K562 (cell line): ENCODE measurements at regions of chr20 and their contacts with region 1.

Region 1: GRCh38 chr20:45771182-45771759 is 20.4 kb downstream of the WFDC3 start:
- DNase-seq: peak; percentile 73 to 87 (median 74)
- ATAC-seq: peak; percentile 87
- H3K4me3 ChIP-seq: no peak overlapping the region
- H3K27ac ChIP-seq: no peak overlapping the region
- H3K4me1 ChIP-seq: peaks cover 0 to 2% of the 10 kb centered on the region in 2 experiments; a peak in 2 of 5 replicates
- H3K27me3 ChIP-seq: peaks cover 5 to 8% of the 10 kb centered on the region in 2 experiments
- CTCF ChIP-seq: peak; percentile 91 to 99 (median 92)
- EP300 ChIP-seq: no peak
- POLR2A ChIP-seq: no peak
- RAD21 ChIP-seq: peak; percentile 95 to 97

Region 2: GRCh38 chr20:45322952-45323383 is 448.3 kb before region 1 on chr20:
- CTCF ChIA-PET with region 1: interaction called, 21 read pairs
- POLR2A ChIA-PET with region 1: interaction called, 4 read pairs
- in situ Hi-C with region 1: loop called (anchors 5 kb)
- intact Hi-C with region 1: loop called (anchors 1 kb)
- DNase-seq: peak in 3 of 4 experiments; percentile 41 to 84 (median 73)
- ATAC-seq: peak; percentile 92
- H3K4me3 ChIP-seq: no peak overlapping the region
- H3K27ac ChIP-seq: no peak overlapping the region
- H3K4me1 ChIP-seq: peaks cover 4 to 9% of the 10 kb centered on the region in 2 experiments; a peak in 4 of 5 replicates
- H3K27me3 ChIP-seq: no peaks in the 10 kb centered on the region
- CTCF ChIP-seq: peak; percentile 78 to 94 (median 81)
- EP300 ChIP-seq: no peak
- POLR2A ChIP-seq: no peak
- RAD21 ChIP-seq: peak; percentile 95 to 97

Region 3: DNA sequence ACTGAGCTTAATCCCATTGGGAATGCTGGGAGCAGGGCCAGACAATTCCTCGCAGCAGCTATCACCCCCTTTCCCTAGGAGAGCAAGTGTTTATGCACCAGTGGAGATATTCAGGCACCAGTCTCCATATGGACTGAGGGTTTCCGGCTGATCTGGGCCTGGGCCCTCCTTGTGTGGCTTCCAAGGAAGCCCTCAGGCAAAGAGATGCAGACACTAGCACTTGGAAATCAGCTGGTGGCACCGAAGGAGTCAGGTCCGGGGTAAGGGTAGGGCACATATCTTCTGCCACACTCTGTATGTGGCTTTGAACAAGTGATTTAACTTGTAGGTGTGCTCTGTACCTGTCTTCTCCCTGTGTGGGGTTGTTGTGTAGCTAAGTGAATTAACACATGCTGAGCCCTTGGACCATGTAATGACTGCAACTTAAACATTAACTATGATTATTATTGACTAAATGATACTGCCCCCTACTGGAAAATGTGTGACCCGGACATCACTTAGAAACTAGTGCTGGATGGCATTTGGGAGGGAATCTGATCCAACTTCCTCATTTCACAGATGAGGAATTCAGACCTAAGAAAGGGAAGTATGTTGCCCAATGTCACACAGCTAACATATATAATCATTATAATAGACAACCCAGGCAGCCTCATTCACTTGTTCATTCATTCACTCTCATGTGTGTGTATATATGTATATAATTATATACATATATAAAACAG is 321.0 kb before region 1 on chr20:
- CTCF ChIA-PET with region 1: interaction called, 3 read pairs
- POLR2A ChIA-PET with region 1: no interaction called
- in situ Hi-C with region 1: loop called (anchors 10 kb)
- intact Hi-C with region 1: loop called (anchors 5 kb)
- DNase-seq: peak; percentile 36 to 70 (median 48)
- ATAC-seq: peak; percentile 81
- H3K4me3 ChIP-seq: no peak overlapping the region
- H3K27ac ChIP-seq: no peak overlapping the region
- H3K4me1 ChIP-seq: no peaks in the 10 kb centered on the region
- H3K27me3 ChIP-seq: peaks cover 8 to 26% of the 10 kb centered on the region in 2 experiments; a peak in 4 of 5 replicates
- CTCF ChIP-seq: peak; percentile 63 to 81 (median 77)
- EP300 ChIP-seq: no peak
- POLR2A ChIP-seq: no peak
- RAD21 ChIP-seq: peak; percentile 37 to 58

Region 4: DNA sequence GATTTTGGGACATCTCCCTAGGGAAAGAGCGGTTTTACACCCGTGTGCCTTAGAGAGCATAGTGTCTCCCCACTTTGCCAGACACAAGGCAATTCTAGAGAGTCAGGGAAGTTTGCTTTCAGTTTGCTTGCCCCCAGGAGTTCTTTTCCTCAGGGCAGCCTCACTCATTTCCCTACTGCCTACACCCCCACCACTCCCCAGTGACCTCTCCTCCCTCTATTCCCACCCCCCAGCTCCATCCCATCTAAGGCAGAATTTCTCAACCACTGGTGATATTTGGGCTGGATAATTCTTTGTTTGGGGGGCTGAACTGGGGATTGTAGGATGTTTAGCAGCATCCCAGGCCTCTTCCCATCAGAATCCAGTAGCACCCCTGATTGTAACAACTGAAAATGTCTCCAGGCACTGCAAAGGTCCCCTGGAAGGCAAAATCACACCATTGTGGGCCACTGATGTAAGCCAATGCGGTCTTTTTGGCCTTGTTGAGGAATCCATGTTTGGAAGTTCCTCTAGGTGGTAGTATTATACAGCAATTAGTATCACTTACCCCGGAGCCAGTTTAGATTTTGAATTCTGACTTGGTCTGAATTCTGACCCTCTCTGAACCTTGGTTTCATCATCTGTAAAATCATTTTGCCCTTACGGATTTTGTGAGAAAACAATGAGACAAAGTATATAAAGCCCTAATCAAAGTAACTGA is 225.4 kb before region 1 on chr20:
- CTCF ChIA-PET with region 1: interaction called, 24 read pairs
- POLR2A ChIA-PET with region 1: no interaction called
- in situ Hi-C with region 1: loop called (anchors 5 kb)
- intact Hi-C with region 1: loop called (anchors 1 kb)
- DNase-seq: peak; percentile 16 to 31 (median 28)
- ATAC-seq: peak; percentile 75
- H3K4me3 ChIP-seq: no peak overlapping the region
- H3K27ac ChIP-seq: no peak overlapping the region
- H3K4me1 ChIP-seq: no peaks in the 10 kb centered on the region
- H3K27me3 ChIP-seq: peaks cover 0 to 7% of the 10 kb centered on the region in 2 experiments; a peak in 2 of 5 replicates
- CTCF ChIP-seq: peak; percentile 34 to 59 (median 47); a peak in 3 of 6 replicates
- EP300 ChIP-seq: no peak
- POLR2A ChIP-seq: no peak
- RAD21 ChIP-seq: peak; percentile 62 to 67

Region 5: GRCh38 chr20:45629496-45630100 is 141.7 kb before region 1 on chr20 and contains the start of gene WFDC10A:
- CTCF ChIA-PET with region 1: no interaction called
- POLR2A ChIA-PET with region 1: no interaction called
- in situ Hi-C with region 1: no loop called
- intact Hi-C with region 1: loop called (anchors 1 kb)
- DNase-seq: peak; percentile 55 to 67 (median 60)
- ATAC-seq: peak; percentile 98
- H3K4me3 ChIP-seq: no peak within 1 kb of the TSS
- H3K27ac ChIP-seq: no peak within 1 kb of the TSS
- H3K4me1 ChIP-seq: no peaks in the 10 kb centered on the region
- H3K27me3 ChIP-seq: no peaks in the 10 kb centered on the region
- CTCF ChIP-seq: peak; percentile 61 to 90 (median 73)
- EP300 ChIP-seq: no peak
- POLR2A ChIP-seq: no peak
- RAD21 ChIP-seq: peak in 1 of 2 experiments; percentile 39; a peak in 3 of 4 replicates
- polyA plus RNA-seq, gene WFDC10A: not detected

Region 6: DNA sequence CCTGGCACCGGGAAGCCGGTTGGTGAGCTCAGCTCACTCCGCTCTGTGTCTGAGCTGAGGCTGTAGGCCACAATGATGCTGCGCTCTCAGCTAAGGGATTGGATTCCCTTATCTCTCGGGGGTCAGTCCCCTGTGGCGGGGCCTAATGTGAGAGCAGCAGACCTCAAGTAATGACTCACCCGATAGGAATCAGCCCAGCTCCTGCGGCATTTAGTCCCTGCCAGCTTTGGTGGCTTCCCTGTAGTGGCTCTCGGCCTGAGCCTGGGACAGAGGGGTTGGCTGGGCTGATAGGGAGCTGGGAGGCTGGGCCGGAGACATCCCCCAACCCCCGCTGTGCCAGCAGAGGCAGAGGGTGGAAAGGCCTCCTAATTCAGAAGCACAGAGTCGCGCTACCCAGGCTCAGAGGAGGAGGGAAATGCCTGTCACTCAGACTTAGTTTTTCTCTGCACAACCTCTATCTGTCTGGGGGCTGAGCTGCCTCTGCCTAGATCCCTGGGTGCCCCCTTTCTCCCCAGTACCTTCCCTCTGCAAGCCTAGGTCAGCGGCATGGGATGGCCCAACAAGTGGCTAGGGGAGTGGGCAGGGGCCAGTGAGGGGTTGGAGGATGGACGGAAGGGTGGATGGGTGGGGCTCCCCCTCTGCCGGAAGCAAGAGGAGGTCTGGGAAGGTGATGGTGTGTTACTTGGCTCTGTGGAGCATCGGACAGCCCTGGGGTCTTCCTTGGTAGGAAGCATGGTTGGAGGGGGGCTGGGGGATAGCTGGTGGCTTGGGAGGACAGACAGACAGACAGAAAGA is 444.8 kb after region 1 on chr20:
- CTCF ChIA-PET with region 1: no interaction called
- POLR2A ChIA-PET with region 1: no interaction called
- in situ Hi-C with region 1: no loop called
- intact Hi-C with region 1: no loop called
- DNase-seq: peak; percentile 78 to 84 (median 81)
- ATAC-seq: peak; percentile 85
- H3K4me3 ChIP-seq: no peak overlapping the region
- H3K27ac ChIP-seq: no peak overlapping the region
- H3K4me1 ChIP-seq: peaks cover 18 to 30% of the 10 kb centered on the region in 2 experiments; a peak in 4 of 5 replicates
- H3K27me3 ChIP-seq: peaks cover 6 to 28% of the 10 kb centered on the region in 2 experiments; a peak in 4 of 5 replicates
- CTCF ChIP-seq: no peak
- EP300 ChIP-seq: no peak; the same call in 1 of the 2 replicates
- POLR2A ChIP-seq: no peak
- RAD21 ChIP-seq: no peak